Activated CD4-positive, alpha-beta memory T cell treated with anti-CD3 and anti-CD28 coated beads for 36 hours (primary cell): ENCODE measurements at regions of chr4 and their contacts with region 1.

Region 1: DNA sequence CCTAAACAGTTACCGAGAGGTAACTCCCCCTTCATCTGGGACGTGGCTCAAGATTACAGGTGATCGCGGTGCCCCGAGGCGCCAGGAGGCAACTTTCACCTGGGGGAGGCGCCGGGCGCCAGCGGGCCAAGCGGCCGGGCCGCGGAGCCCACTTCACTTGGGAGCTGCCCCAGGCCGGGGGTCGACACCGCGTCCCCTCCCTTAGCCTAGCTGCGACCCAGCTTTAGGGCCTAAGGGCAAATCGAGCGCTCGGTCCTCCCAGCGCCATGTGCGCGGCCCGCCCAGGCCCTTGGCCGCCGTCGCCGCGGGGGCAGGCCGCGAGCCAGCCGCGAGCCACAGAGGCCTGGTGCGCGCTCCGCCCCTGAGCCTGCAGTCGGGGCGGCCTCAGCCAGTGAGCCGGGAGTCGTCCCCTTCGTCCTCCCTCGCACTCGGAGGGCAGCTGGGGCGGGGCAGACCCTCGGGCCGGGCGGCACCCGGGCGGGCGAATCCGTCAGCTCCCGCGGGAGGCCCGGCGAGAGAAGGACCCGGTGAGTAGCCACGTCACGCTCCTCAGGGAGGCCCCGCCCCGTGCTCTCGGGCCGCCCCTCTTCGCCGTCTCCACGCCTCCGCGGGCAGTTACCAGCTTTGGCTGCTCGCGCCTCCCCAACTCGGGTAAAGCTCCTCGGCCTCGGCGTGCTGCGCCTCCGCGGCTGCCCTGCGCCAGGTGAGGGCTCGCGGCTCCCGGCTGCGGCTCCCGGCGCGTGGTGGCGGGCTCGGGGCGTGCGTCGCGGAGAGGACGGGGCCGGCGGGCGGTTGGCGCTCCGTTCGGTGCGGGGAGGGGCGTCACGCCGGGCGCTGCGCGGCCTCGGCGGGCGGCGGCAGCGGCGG is at the start of gene LARP1B:
- DNase-seq: peak; percentile 95
- H3K4me3 Mint-ChIP-seq: peak within 1 kb of the TSS; percentile 87
- H3K27ac Mint-ChIP-seq: peak within 1 kb of the TSS; percentile 87
- H3K4me1 Mint-ChIP-seq: peaks cover 15% of the 10 kb centered on the region
- H3K27me3 Mint-ChIP-seq: no peaks in the 10 kb centered on the region
- total RNA-seq, gene LARP1B: 23.5 to 25.5 TPM

Region 2: DNA sequence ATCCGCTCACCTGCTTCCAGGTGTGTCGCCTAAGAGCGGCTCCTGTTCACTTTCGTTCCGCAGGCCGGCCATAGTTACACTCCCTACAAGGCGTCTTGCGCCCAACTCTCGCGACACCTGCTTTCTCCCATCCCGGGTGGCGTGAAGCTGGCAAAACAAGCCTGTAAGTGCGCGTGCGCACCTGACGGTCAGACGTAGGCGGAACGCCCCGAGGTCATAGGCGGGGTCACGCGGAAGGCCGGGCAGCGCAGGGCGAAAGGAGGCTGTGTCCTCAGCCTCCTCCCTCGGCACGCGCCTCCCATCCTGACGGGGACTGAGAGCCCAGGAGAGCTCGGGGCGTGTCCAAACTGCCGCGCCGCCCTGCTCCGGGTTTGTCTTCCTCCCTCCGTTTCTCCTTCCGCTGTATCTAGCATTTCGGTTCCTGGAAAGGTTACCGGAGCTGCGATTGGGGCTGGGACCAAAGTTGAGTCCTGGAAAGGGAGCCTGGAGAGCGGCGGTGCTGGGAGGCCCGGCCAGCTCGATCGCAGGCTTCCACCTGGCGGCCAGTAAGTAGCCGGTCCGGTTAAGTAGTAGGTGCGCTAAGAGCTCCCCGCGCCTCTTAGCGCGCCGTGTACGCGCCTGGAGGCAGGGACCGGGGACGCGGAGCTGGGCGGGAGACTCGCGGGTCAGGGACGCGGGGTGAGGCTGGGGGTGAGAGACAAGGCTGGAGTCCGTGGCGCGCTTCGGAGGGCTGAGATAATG is 95.7 kb before region 1 on chr4 and contains the starts of genes ABHD18 and MFSD8:
- CTCF ChIA-PET with region 1: interaction called, 7 read pairs
- POLR2A ChIA-PET with region 1: interaction called, 44 read pairs
- intact Hi-C with region 1: loop called (anchors 1 kb)
- DNase-seq: peak; percentile 100
- H3K4me3 Mint-ChIP-seq: peak within 1 kb of the TSS; percentile 94
- H3K27ac Mint-ChIP-seq: peak within 1 kb of the TSS; percentile 95
- H3K4me1 Mint-ChIP-seq: peaks cover 38% of the 10 kb centered on the region
- H3K27me3 Mint-ChIP-seq: no peaks in the 10 kb centered on the region
- total RNA-seq, gene ABHD18: 17.3 to 18.9 TPM
- total RNA-seq, gene MFSD8: 13.0 to 15.3 TPM